ENCODE measurements at regions of chr16 and their contacts with region 1.

Region 1: GRCh38 chr16:19555162-19555937 is at the start of gene VPS35L:
- DNase-seq: peak; percentile 91 to 99
- H3K4me3 ChIP-seq: peak within 1 kb of the TSS; percentile 74 to 75
- H3K27ac ChIP-seq: peak within 1 kb of the TSS; percentile 91
- H3K4me1 ChIP-seq: peaks cover 0 to 8% of the 10 kb centered on the region in 2 donors
- H3K27me3 ChIP-seq: no peaks in the 10 kb centered on the region
- CTCF ChIP-seq: peak; percentile 70 to 88 (median 81)
- total RNA-seq, gene VPS35L: 44.4 TPM

Region 2: DNA sequence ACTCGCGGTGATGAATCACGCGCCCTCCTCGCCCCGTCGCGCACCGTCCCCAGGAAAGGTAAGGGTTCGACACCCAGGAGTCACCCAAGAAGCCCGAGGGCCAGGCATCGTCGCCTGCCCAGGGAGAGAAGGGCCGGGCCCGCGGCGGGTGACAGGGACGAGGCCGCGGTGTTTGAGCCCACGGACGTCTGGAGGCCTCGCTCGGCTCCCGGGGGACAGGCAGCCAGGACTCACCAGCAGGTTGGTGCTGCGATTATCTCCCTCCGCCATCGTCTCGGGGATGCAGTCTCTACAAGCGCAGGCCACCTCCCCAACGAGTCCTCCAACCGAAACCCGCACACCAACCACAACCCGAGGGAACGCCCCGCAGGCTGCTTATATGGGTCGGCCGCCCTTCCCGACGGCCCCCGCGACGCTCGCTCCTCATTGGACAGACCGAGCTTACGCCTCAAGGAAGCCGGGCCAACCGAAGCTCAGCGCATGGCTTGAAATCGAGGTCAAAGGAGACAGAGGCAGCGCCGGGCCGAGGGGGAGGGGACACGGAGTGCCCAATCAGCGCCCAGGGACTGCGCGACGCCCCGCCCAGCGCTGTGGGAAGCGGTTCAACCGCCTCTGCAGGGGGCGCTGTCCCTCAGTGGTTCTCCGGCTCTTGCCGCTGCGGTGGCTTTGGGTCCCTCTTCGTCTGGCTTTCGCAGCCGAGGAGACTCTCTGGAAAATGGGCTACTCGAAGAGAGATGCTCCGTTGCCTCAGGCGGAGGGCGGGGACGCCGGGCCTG is 754.0 kb before region 1 on chr16 and contains the start of gene ARL6IP1:
- intact Hi-C with region 1: loop called (anchors 10 kb)
- DNase-seq: peak; percentile 99 to 100
- H3K4me3 ChIP-seq: peak within 1 kb of the TSS; percentile 86 to 97
- H3K27ac ChIP-seq: peak within 1 kb of the TSS; percentile 91 to 96
- H3K4me1 ChIP-seq: peaks cover 3 to 21% of the 10 kb centered on the region in 2 donors
- H3K27me3 ChIP-seq: no peaks in the 10 kb centered on the region
- CTCF ChIP-seq: peak; percentile 91 to 98 (median 95)
- total RNA-seq, gene ARL6IP1: 71.6 TPM

Region 3: GRCh38 chr16:19573997-19574396 is 18.6 kb after region 1 on chr16:
- intact Hi-C with region 1: no loop called
- DNase-seq: no peak
- H3K4me3 ChIP-seq: no peak overlapping the region
- H3K27ac ChIP-seq: no peak overlapping the region
- H3K4me1 ChIP-seq: no peaks in the 10 kb centered on the region
- H3K27me3 ChIP-seq: no peaks in the 10 kb centered on the region
- CTCF ChIP-seq: no peak

Region 4: DNA sequence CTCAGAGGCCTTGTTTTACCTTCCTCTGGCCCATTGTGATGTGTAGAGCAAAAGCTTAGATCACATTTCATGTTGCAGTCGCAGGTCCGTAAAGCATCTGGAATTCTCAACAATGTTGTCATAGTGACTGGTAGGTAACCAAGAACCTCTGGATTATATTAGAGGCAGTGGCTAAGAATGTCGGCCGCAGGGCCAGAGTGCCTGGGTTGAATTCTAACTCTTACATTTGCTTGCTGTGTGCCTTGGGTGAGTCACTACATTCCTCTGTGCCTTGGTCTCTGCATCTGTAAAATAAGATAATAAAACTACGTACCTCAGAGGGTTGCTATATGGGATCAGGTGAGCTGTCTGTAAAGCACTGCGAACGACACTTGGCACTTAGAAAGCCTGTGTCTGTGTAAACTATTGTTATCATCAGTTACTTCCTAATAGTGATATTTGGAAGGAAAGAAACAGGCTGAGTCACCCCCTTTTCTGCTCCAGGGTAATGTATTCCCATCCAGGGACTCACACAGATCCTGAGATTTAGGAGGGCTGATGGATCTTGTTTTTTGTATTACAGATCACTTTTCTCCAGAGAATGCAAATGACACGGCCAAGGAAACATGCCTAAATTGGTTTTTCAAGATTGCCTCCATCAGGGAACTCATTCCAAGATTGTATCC is 52.4 kb after region 1 on chr16:
- intact Hi-C with region 1: loop called (anchors 5 kb)
- DNase-seq: no peak
- H3K4me3 ChIP-seq: no peak overlapping the region
- H3K27ac ChIP-seq: peak overlapping the region in 1 of 2 donors; percentile 50
- H3K4me1 ChIP-seq: no peaks in the 10 kb centered on the region
- H3K27me3 ChIP-seq: no peaks in the 10 kb centered on the region
- CTCF ChIP-seq: no peak

Region 5: GRCh38 chr16:19886073-19886941 is 331.0 kb after region 1 on chr16:
- intact Hi-C with region 1: loop called (anchors 1 kb)
- DNase-seq: peak in 1 of 2 donors; percentile 87
- H3K4me3 ChIP-seq: peak overlapping the region; percentile 73 to 91
- H3K27ac ChIP-seq: no peak overlapping the region
- H3K4me1 ChIP-seq: peaks cover 0 to 5% of the 10 kb centered on the region in 2 donors
- H3K27me3 ChIP-seq: no peaks in the 10 kb centered on the region
- CTCF ChIP-seq: peak; percentile 96 to 100 (median 99)

Region 6: DNA sequence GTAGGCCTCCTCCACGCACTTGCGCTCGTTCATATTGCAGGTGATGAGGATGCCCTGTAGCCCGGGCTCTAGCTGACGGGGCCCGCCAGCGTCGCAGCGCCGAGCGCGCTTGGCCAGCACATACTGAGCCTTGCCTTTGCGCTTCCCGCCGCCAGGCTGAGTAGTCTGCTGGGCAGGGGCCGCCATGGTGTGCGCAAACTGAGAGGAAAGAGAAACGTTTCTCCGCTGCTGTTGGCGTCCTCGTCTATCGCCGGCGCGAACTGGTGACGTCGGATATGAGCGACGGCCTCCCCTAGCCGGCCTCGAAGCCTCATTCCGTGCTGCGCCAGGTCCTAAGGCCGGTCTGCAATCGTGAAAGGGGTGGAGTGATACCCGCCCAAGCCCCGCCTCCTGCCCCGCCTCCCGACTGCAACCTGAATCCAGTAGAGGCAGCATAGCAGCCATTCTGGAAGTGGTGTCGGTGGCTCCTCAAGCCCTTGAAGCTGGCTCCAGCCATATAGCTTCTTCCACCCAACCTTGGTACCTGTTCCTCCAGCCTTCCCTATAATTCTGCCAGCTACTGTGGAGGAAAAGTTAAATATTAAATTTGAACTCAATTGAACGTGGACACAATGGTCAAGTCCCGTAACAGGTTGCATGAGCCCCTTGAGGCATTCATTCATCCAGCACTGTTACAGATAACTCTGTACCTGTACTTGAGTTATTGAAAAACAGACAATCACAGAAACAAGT is 1186.4 kb after region 1 on chr16 and contains the start of gene THUMPD1:
- intact Hi-C with region 1: loop called (anchors 5 kb)
- DNase-seq: peak; percentile 90 to 98
- H3K4me3 ChIP-seq: peak within 1 kb of the TSS; percentile 85 to 88
- H3K27ac ChIP-seq: peak within 1 kb of the TSS; percentile 94 to 97
- H3K4me1 ChIP-seq: peaks cover 3 to 19% of the 10 kb centered on the region in 2 donors
- H3K27me3 ChIP-seq: no peaks in the 10 kb centered on the region
- CTCF ChIP-seq: peak in 2 of 3 experiments; percentile 15 to 34
- total RNA-seq, gene THUMPD1: 12.7 TPM